ENCODE measurements at regions of chr6 and their contacts with region 1.

Region 1: GRCh38 chr6:137661601-137662000 is 167.4 kb upstream of the OLIG3 start:
- DNase-seq: no peak
- ATAC-seq: peak; percentile 69
- H3K4me3 ChIP-seq: no peak overlapping the region
- H3K27ac ChIP-seq: no peak overlapping the region
- H3K4me1 ChIP-seq: peaks cover 5% of the 10 kb centered on the region; the same call in 1 of the 2 replicates
- H3K27me3 ChIP-seq: no peaks in the 10 kb centered on the region
- CTCF ChIP-seq: peak; percentile 51 to 75 (median 68)
- EP300 ChIP-seq: no peak
- POLR2A ChIP-seq: no peak
- RAD21 ChIP-seq: peak; percentile 66

Region 2: DNA sequence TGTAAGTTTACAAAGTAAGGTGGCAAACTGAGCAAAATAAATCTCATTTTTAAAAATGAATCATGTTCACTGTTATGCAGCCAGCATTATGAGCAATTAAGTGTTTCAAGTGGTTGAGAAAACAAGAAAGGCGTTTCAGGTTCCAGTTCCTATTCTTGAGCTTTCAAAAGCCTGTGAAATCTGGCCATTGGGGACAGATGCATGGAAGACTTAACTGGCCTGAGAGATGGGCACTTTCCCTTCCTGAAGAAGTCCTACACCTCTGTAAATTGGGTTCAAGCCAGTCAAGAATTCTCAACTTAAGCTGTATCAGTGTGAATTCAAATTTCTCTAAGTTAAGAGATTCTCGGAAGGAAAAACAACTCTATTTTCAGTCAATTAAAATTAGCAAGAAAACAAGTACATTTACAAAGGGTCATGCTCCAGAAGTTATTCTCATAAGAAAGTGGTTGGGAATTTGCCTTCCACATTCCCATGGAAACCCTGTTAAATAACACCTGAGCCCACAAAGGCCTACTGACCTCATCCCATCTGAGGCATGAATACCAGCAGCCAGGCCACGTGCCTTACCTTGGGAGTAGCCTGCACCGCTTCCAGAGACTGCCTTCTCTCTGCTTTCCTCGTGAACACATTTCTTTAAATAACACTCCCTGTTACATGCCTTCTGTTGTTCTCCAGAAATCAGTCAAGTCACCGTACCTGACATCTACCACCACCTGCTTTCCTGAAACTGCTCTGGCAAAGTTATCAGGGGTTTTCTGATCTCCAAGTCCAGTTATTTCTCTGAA is 888.7 kb before region 1 on chr6:
- CTCF ChIA-PET with region 1: no interaction called
- POLR2A ChIA-PET with region 1: no interaction called
- RAD21 ChIA-PET with region 1: no interaction called
- SMC1A ChIA-PET with region 1: no interaction called
- in situ Hi-C with region 1: no loop called
- intact Hi-C with region 1: no loop called
- DNase-seq: peak; percentile 93
- ATAC-seq: peak; percentile 75
- H3K4me3 ChIP-seq: peak overlapping the region; percentile 49
- H3K27ac ChIP-seq: peak overlapping the region; percentile 92
- H3K4me1 ChIP-seq: peaks cover 57% of the 10 kb centered on the region
- H3K27me3 ChIP-seq: no peaks in the 10 kb centered on the region
- CTCF ChIP-seq: no peak
- EP300 ChIP-seq: peak; percentile 50 to 93; a peak in 3 of 4 replicates
- POLR2A ChIP-seq: peak; percentile 38; the same call in 1 of the 2 replicates
- RAD21 ChIP-seq: no peak; the same call in 1 of the 2 replicates

Region 3: DNA sequence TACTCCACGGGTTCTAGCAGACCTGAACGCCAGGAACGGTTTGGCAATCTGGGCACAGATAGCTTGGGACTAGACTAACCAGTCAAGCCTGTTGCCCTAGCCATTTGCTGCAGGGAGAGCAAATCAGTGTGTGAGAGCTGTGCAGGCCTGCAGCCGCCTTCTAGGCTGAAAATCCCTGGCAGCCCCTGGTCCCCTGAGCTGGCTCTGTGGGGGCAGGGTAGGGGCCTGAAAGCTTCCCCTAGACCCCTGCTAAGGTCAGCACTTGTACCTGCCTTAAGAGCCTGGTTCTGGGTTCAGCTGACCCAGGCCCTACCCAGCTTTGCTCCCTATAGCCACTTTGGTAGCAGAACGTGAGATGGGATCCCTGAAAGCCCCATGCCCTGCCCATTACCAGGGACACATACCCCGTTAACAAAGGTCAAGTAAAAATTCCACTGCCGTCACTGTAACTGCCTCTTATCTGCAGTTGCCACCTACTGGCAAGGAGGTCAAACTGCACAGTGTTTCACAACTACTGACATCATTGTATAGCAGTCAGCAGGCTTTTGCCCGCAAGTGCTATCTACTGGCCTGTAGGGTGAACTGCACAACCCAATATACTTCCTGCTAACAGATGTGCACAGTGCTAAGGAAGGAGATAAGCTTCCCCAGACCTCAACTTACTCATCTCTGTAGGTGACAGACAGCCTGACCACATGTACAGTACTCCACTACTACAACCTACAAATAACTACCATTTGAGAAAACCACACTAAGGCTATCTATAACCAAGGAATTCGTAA is 72.3 kb before region 1 on chr6:
- CTCF ChIA-PET with region 1: no interaction called
- POLR2A ChIA-PET with region 1: no interaction called
- RAD21 ChIA-PET with region 1: no interaction called
- SMC1A ChIA-PET with region 1: no interaction called
- in situ Hi-C with region 1: no loop called
- intact Hi-C with region 1: no loop called
- DNase-seq: peak; percentile 74
- ATAC-seq: peak; percentile 100
- H3K4me3 ChIP-seq: 0 out of 2 replicates have a peak overlapping the region, but pooled peaks have one; percentile 19
- H3K27ac ChIP-seq: no peak overlapping the region
- H3K4me1 ChIP-seq: peaks cover 2% of the 10 kb centered on the region; the same call in 1 of the 2 replicates
- H3K27me3 ChIP-seq: no peaks in the 10 kb centered on the region
- CTCF ChIP-seq: peak; percentile 62 to 98 (median 81)
- EP300 ChIP-seq: no peak
- POLR2A ChIP-seq: no peak
- RAD21 ChIP-seq: peak; percentile 72

Region 4: DNA sequence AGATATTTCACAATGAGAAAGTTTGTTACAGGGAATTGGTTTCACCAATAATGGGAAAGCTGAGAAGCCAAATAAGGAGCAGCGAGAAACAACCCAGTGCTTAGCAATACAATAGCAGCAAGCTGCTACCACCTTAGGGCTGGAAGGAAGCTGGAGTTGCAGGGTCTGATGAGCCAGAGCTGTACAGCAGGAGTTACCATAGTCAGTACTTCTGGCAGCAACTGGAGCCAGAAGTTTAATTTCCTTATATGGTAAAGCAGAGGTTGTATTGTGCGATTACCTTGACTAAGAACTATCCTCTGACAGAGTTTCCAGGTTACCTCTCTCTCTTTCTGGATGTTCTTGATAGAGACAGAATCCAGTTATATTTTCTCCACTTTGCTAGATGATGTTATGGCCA is 30.3 kb before region 1 on chr6:
- CTCF ChIA-PET with region 1: interaction called, 10 read pairs
- POLR2A ChIA-PET with region 1: no interaction called
- RAD21 ChIA-PET with region 1: interaction called, 5 read pairs
- SMC1A ChIA-PET with region 1: interaction called, 3 read pairs
- in situ Hi-C with region 1: no loop called
- intact Hi-C with region 1: no loop called
- DNase-seq: no peak
- ATAC-seq: peak; percentile 81
- H3K4me3 ChIP-seq: no peak overlapping the region
- H3K27ac ChIP-seq: peak overlapping the region; percentile 76
- H3K4me1 ChIP-seq: peaks cover 46% of the 10 kb centered on the region
- H3K27me3 ChIP-seq: no peaks in the 10 kb centered on the region
- CTCF ChIP-seq: no peak
- EP300 ChIP-seq: no peak
- POLR2A ChIP-seq: no peak
- RAD21 ChIP-seq: no peak

Region 5: GRCh38 chr6:137680705-137681346 is 19.2 kb after region 1 on chr6:
- CTCF ChIA-PET with region 1: interaction called, 5 read pairs
- POLR2A ChIA-PET with region 1: interaction called, 5 read pairs
- RAD21 ChIA-PET with region 1: interaction called, 15 read pairs
- SMC1A ChIA-PET with region 1: interaction called, 18 read pairs
- in situ Hi-C with region 1: no loop called
- intact Hi-C with region 1: no loop called
- DNase-seq: no peak
- ATAC-seq: peak; percentile 53
- H3K4me3 ChIP-seq: no peak overlapping the region
- H3K27ac ChIP-seq: no peak overlapping the region; the same call in 1 of the 2 replicates
- H3K4me1 ChIP-seq: peaks cover 27% of the 10 kb centered on the region
- H3K27me3 ChIP-seq: no peaks in the 10 kb centered on the region
- CTCF ChIP-seq: no peak
- EP300 ChIP-seq: no peak; a peak in 1 of 4 replicates
- POLR2A ChIP-seq: no peak
- RAD21 ChIP-seq: no peak

Region 6: GRCh38 chr6:137697267-137697938 is 35.8 kb after region 1 on chr6:
- CTCF ChIA-PET with region 1: interaction called, 97 read pairs
- POLR2A ChIA-PET with region 1: interaction called, 24 read pairs
- RAD21 ChIA-PET with region 1: interaction called, 54 read pairs
- SMC1A ChIA-PET with region 1: interaction called, 236 read pairs
- in situ Hi-C with region 1: no loop called
- intact Hi-C with region 1: no loop called
- DNase-seq: no peak
- ATAC-seq: peak; percentile 80
- H3K4me3 ChIP-seq: no peak overlapping the region
- H3K27ac ChIP-seq: no peak overlapping the region
- H3K4me1 ChIP-seq: peaks cover 13% of the 10 kb centered on the region
- H3K27me3 ChIP-seq: no peaks in the 10 kb centered on the region
- CTCF ChIP-seq: peak; percentile 14 to 35 (median 27); a peak in 5 of 6 replicates
- EP300 ChIP-seq: no peak
- POLR2A ChIP-seq: no peak
- RAD21 ChIP-seq: peak; percentile 58

Region 7: DNA sequence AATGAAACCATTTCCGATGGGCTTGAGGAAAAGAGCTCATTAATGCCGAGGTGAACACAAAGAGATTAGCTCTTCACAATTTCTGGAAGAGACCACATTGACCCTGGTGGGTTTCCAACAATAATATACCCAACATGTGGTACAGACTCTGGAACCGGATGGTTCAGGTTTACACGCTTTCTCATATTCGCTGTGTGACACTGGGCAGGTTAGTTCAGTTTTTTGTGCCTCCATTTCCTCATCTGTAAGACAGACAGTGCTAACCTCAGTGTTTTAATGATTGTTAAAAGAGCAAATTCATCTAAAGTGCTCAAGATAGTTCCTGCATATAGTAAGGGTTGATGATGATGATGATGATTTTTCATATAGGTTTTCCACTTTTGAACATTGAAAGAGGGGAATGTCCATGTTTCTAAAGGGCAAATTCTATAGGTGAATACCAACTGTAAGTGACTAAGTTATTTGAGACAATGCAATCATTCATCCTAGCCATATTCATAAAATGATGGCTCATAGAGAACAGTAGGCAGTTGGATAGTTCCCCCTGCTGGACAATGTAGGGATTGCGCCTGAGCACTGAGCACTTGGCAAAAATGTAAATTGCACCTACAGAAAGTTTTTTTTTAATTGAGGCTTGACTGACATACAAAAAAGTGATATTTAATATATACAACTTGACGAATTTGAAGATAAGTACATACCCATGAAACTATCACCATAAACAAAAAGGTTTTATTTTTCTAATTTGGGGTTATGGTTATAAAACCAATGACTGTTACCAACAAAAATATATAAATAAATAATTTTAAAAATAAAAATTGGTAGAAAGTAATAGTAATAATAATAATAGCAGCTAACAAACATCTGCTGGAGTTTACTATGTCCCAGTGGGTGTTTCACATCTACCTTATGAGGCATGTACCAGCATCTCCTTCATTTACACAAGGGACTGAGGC is 447.7 kb after region 1 on chr6:
- CTCF ChIA-PET with region 1: no interaction called
- POLR2A ChIA-PET with region 1: no interaction called
- RAD21 ChIA-PET with region 1: no interaction called
- SMC1A ChIA-PET with region 1: no interaction called
- in situ Hi-C with region 1: no loop called
- intact Hi-C with region 1: loop called (anchors 5 kb)
- DNase-seq: peak; percentile 21
- ATAC-seq: peak; percentile 52
- H3K4me3 ChIP-seq: no peak overlapping the region
- H3K27ac ChIP-seq: no peak overlapping the region
- H3K4me1 ChIP-seq: 0 out of 2 replicates have a peak, but pooled peaks cover 5% of the 10 kb centered on the region
- H3K27me3 ChIP-seq: peaks cover 2 to 31% of the 10 kb centered on the region in 2 experiments
- CTCF ChIP-seq: peak; percentile 84 to 94 (median 91)
- EP300 ChIP-seq: no peak
- POLR2A ChIP-seq: no peak
- RAD21 ChIP-seq: peak; percentile 88

Region 8: DNA sequence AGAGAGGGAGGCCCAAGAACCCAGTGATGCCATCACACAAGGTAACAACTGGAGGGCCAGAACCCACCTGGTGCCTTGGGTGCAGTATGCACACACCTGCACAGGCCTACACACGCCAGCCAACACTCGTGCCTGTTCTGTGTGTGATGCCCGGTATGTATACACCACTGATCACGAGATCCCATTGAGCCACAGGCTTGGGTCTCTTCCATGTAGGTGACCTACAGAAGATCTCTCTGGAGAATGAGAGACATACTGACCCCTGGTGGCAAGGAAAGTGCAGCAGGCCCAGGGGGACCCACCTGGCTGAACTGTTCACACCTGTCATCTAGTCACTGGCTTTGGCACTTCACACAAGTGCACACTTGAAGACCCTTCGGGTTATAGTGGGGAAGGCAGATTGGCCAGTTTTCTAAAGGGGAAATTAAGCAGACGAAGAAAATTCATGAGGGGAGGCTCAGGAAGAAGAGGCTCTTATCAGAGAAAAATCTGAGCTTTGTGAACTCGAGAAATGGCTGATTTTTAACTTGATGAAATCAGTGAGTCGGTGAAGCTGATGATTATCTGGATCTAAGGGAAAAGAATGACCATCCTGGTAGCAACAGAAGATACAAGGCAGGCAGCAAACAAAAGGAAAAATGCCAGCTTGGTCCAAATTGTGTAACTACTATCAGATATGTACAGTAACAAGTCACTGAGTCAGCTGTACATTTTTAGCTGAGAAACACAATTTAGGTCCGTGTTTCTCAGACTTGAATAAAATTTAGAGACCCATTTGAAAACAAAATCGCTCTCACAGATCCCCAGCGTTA is 625.7 kb after region 1 on chr6:
- CTCF ChIA-PET with region 1: no interaction called
- POLR2A ChIA-PET with region 1: no interaction called
- RAD21 ChIA-PET with region 1: no interaction called
- SMC1A ChIA-PET with region 1: no interaction called
- in situ Hi-C with region 1: no loop called
- intact Hi-C with region 1: no loop called
- DNase-seq: no peak
- ATAC-seq: peak; percentile 90
- H3K4me3 ChIP-seq: no peak overlapping the region
- H3K27ac ChIP-seq: no peak overlapping the region
- H3K4me1 ChIP-seq: no peaks in the 10 kb centered on the region
- H3K27me3 ChIP-seq: no peaks in the 10 kb centered on the region
- CTCF ChIP-seq: peak; percentile 60 to 86 (median 81)
- EP300 ChIP-seq: no peak
- POLR2A ChIP-seq: no peak
- RAD21 ChIP-seq: peak; percentile 49